CD4-positive, alpha-beta memory T cell (primary cell): ENCODE measurements at regions of chr1 and their contacts with region 1.

Region 1: DNA sequence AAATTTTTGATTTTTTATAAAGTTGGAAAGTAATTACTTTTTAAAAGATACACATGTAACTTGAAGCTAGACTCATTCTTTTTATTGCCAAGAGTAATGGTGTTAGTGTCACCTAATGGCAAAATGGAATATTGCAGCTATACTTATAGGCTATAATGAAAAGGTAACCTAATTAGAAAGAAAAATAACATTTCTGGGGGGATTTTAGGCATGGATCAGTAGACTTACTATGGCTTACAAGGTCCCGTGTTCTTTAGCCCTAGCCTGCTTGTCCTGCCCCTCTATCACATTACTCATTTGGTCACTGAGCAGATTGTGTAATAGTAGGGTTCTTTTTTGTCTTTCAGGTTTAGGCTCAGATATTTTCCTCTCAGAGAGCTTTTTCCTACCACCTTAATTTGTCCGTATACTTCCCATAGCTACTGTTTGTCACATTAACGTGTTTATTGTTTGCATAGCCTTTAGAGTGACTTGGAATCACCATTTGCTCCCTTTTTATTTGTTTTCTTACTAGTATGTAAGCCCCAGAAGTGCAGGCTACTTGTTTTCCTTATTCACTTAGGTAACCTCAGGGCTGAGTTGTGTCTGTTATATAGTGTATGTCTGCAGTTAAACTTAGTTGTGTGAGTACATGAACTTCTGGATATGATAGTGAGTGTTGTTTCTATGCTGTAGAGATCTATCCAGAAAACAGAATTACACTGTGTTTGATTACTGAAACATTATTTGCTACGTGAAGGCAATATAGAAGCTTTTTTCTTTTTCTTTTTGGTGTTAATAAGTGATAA is 58.7 kb downstream of the RABGAP1L start:
- DNase-seq: peak in 4 of 5 donors; percentile 37 to 45 (median 40)
- H3K4me3 ChIP-seq: no peak overlapping the region
- H3K4me3 Mint-ChIP-seq: no peak overlapping the region
- H3K27ac ChIP-seq: no peak overlapping the region
- H3K27ac Mint-ChIP-seq: no peak overlapping the region
- H3K4me1 ChIP-seq: no peaks in the 10 kb centered on the region
- H3K4me1 Mint-ChIP-seq: peaks cover 0 to 5% (median 2%) of the 10 kb centered on the region in 4 donors
- H3K27me3 ChIP-seq: no peaks in the 10 kb centered on the region
- H3K27me3 Mint-ChIP-seq: no peaks in the 10 kb centered on the region

Region 2: DNA sequence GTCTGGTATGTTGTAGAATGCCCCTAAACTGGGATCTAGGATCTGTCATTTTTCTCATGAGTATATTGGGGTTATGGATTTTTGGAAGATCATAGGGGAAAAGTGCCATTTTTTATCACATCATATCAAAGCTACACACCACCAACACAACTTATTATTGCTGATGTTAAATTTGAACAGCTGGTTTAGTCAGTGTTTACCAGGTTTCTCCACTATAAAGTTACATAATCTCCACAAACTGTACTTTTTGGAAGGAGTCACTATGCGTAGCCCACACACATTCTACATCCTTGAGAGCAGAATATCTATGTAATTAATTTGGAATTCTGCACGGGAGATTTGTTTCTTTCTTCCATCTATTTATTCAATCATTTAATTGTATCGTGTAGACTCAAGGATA is 231.0 kb before region 1 on chr1:
- CTCF ChIA-PET with region 1: interaction called, 4 read pairs
- POLR2A ChIA-PET with region 1: no interaction called
- intact Hi-C with region 1: loop called (anchors 5 kb)
- DNase-seq: no peak
- H3K4me3 ChIP-seq: no peak overlapping the region
- H3K4me3 Mint-ChIP-seq: no peak overlapping the region
- H3K27ac ChIP-seq: no peak overlapping the region
- H3K27ac Mint-ChIP-seq: peak overlapping the region in 2 of 7 donors; percentile 35 to 72
- H3K4me1 ChIP-seq: no peaks in the 10 kb centered on the region
- H3K4me1 Mint-ChIP-seq: peaks cover 5 to 12% (median 7%) of the 10 kb centered on the region in 4 donors
- H3K27me3 ChIP-seq: no peaks in the 10 kb centered on the region
- H3K27me3 Mint-ChIP-seq: no peaks in the 10 kb centered on the region

Region 3: DNA sequence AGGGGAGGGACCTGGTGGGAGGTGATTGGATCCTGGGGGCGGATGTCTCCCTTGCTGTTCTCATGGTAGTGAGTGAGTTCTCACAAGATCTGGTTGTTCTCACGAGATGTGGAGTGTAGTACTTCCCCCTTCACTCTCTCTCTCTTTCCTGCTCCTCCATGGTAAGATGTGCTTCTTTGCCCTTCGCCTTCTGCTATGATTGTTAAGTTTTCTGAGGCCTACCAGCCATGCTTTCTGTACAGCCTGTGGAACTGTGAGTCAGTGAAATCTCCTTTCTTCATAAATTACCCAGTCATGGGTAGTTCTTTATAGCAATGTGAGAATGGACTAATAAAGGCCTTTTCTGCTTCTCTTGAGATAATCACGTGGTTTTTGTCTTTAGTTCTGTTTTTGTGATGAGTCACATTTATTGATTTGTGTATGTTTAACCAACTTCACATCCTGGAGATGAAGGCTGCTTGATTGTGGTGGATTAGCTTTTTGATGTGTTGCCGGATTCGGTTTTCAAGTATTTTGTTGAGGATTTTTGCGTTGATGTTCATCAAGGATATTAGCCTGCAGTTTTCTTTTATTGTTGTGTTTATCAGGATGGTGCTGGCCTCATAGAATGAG is 13.2 kb before region 1 on chr1:
- CTCF ChIA-PET with region 1: interaction called, 20 read pairs
- POLR2A ChIA-PET with region 1: interaction called, 3 read pairs
- intact Hi-C with region 1: no loop called
- DNase-seq: peak; percentile 45 to 65 (median 55)
- H3K4me3 ChIP-seq: no peak overlapping the region
- H3K4me3 Mint-ChIP-seq: peak overlapping the region; percentile 17 to 81 (median 54)
- H3K27ac ChIP-seq: peak overlapping the region; percentile 22
- H3K27ac Mint-ChIP-seq: peak overlapping the region; percentile 69 to 94 (median 86)
- H3K4me1 ChIP-seq: peaks cover 42% of the 10 kb centered on the region
- H3K4me1 Mint-ChIP-seq: peaks cover 43 to 67% (median 56%) of the 10 kb centered on the region in 4 donors
- H3K27me3 ChIP-seq: no peaks in the 10 kb centered on the region
- H3K27me3 Mint-ChIP-seq: no peaks in the 10 kb centered on the region